AG04450 (cell line): ENCODE measurements at regions of chr14 and their contacts with region 1.

Region 1: DNA sequence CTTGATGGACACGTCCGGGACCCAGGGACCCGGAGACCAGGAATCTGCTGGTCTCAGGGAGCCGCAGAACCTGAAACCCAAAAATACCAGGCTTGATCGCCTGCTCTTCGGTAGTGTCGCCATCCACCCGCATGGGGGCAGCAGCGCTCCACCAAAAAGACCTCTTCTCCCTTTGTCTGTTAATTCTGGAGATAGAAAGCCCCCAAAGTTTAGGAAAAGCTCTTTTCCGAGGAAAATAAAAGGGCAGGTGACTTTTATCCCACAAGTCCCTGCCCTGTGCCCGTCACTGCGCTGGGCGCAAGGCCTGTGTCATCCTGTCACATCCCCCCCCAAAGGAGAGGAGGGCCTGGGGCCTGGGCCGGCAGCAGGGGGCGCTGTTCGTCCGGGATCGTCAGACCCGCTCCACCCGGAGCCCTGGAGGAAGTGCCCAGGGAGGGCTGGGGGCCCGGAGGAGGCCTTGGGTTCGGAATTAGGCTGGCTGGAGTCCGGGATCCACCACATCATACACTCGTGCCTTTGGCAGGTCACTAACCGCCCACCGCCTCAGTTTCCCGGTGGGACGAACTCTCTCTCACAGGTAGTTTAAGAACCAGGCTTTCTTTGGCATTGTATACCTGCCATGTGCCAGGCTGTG is 31.9 kb downstream of the DAD1 start:
- DNase-seq: peak; percentile 33
- H3K4me3 ChIP-seq: peak overlapping the region; percentile 43
- H3K27ac ChIP-seq: peak overlapping the region; percentile 57
- H3K27me3 ChIP-seq: no peaks in the 10 kb centered on the region
- CTCF ChIP-seq: peak; percentile 92

Region 2: GRCh38 chr14:22386924-22387775 is 170.0 kb before region 1 on chr14:
- CTCF ChIA-PET with region 1: interaction called, 39 read pairs
- POLR2A ChIA-PET with region 1: no interaction called
- DNase-seq: peak; percentile 47
- H3K4me3 ChIP-seq: no peak overlapping the region
- H3K27ac ChIP-seq: no peak overlapping the region
- H3K27me3 ChIP-seq: peaks cover 5% of the 10 kb centered on the region
- CTCF ChIP-seq: peak; percentile 74

Region 3: DNA sequence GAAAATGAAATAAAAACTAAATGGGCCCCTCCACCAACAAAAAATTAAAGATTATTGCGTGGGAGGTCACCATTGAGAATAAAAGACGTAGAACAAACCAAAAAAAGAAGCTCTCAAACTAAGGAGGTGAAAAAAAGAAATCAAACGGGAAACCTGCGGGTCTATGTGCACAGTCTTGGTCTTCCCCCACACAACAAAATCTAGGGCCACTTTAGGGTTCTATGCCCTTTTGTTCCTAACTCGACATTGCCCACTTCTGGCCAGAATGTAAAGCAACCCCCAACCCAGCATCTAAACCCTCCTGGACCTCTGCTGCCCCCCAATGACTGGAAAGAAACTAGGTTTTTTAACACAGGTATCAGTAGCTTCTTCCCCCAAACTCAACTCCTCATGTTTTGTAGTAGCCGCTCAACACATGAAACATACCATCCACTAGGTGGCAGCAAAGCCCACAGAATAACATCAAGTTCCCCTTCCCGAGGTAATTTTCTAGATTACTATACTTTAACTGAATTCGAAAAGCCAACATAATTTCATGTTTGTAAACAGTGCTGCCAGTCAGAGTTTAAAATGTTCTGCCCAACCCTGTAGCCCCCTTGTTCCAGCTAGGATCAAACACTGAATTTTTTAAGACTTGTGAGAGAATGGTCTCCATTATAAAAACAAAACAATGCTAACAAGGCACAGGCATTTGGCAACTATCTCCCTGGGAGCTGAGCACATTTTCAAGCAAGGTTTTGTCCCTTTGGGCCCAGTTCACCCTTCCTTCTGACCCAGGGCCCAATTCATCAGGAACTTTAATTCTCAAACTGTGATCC is 13.2 kb after region 1 on chr14:
- CTCF ChIA-PET with region 1: interaction called, 72 read pairs
- POLR2A ChIA-PET with region 1: no interaction called
- DNase-seq: no peak
- H3K4me3 ChIP-seq: no peak overlapping the region
- H3K27ac ChIP-seq: no peak overlapping the region
- H3K27me3 ChIP-seq: no peaks in the 10 kb centered on the region
- CTCF ChIP-seq: peak; percentile 68

Region 4: DNA sequence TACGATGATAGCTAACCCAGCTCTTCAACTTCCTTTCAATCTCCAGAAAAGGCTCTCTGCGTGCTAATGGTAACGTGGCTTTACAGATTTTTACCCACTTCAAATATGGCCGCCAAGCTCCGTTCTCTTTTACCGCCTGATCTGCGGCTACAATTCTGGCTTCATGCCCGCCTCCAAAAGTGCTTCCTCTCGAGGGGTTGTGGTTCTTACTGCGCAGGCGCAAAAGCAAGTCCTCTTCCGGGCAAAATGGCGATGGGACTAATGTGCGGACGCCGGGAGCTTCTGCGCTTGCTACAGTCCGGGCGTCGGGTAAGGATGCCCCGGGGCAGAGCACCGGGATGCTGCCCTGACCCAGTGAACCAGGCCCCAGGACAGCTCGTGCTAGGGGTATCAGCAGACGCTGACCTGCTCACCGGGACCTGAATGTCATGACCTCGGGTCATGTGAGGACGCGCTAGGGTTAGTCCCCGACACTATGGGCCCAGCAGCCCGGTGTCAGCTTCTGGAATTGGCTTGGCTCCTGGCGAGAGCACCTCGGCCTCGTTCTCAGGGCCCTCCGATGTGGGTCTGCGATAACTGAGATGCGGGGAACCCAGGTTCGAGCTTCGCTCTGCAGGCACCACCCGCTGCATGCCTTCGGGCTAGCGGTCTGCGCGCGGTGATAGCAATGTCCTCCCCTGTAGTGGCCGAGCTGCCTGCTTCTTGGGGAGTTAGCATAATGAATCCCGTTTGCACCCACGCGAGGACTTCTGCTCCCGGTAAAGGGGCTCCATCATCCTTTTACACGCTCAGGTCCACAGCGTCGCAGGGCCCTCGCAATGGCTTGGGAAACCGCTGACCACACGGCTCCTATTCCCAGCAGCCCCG is 209.6 kb after region 1 on chr14 and contains the start of gene OXA1L:
- CTCF ChIA-PET with region 1: interaction called, 30 read pairs
- POLR2A ChIA-PET with region 1: interaction called, 5 read pairs
- DNase-seq: peak; percentile 95
- H3K4me3 ChIP-seq: peak within 1 kb of the TSS; percentile 100
- H3K27ac ChIP-seq: peak within 1 kb of the TSS; percentile 78
- H3K27me3 ChIP-seq: no peaks in the 10 kb centered on the region
- CTCF ChIP-seq: no peak
- polyA plus RNA-seq, gene OXA1L: 181 and 198 TPM in 2 replicates

Region 5: DNA sequence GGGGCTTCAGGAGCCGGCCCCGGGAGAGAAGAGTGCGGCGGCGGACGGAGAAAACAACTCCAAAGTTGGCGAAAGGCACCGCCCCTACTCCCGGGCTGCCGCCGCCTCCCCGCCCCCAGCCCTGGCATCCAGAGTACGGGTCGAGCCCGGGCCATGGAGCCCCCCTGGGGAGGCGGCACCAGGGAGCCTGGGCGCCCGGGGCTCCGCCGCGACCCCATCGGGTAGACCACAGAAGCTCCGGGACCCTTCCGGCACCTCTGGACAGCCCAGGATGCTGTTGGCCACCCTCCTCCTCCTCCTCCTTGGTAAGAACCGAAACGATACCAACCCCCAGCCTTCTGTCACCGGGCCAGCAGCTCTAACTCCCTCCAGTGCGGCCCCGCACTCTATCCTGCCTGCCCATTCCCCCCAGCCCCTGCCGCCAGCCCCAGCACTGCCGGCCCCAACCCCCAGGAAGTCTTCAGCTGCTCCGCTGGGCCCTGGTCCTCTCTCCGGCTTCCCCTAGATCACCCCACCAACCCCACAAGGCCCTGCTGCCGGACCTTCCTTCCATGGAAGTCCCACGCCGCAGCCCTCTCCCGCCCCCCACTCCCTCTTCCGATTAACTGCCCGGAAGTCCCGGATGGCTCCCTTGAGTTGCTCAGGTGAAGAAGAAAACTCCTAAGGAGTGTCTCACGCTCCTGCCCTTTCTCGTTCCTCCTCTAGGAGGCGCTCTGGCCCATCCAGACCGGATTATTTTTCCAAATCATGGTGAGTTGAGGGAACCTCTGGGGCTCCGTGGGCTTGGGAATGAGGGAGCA is 315.1 kb after region 1 on chr14:
- CTCF ChIA-PET with region 1: interaction called, 37 read pairs
- POLR2A ChIA-PET with region 1: no interaction called
- DNase-seq: peak; percentile 58
- H3K4me3 ChIP-seq: peak overlapping the region; percentile 80
- H3K27ac ChIP-seq: peak overlapping the region; percentile 91
- H3K27me3 ChIP-seq: no peaks in the 10 kb centered on the region
- CTCF ChIP-seq: peak; percentile 96

Region 6: GRCh38 chr14:22973217-22974032 is 416.3 kb after region 1 on chr14:
- CTCF ChIA-PET with region 1: interaction called, 14 read pairs
- POLR2A ChIA-PET with region 1: no interaction called
- DNase-seq: no peak
- H3K4me3 ChIP-seq: no peak overlapping the region
- H3K27ac ChIP-seq: no peak overlapping the region
- H3K27me3 ChIP-seq: no peaks in the 10 kb centered on the region
- CTCF ChIP-seq: peak; percentile 68

Region 7: GRCh38 chr14:23068476-23069412 is 511.6 kb after region 1 on chr14:
- CTCF ChIA-PET with region 1: interaction called, 10 read pairs
- POLR2A ChIA-PET with region 1: no interaction called
- DNase-seq: peak; percentile 80
- H3K4me3 ChIP-seq: peak overlapping the region; percentile 49
- H3K27ac ChIP-seq: no peak overlapping the region
- H3K27me3 ChIP-seq: no peaks in the 10 kb centered on the region
- CTCF ChIP-seq: peak; percentile 100